Kidney (tissue), 22 donors: ENCODE measurements at regions of chr7 and their contacts with region 1.

Region 1: DNA sequence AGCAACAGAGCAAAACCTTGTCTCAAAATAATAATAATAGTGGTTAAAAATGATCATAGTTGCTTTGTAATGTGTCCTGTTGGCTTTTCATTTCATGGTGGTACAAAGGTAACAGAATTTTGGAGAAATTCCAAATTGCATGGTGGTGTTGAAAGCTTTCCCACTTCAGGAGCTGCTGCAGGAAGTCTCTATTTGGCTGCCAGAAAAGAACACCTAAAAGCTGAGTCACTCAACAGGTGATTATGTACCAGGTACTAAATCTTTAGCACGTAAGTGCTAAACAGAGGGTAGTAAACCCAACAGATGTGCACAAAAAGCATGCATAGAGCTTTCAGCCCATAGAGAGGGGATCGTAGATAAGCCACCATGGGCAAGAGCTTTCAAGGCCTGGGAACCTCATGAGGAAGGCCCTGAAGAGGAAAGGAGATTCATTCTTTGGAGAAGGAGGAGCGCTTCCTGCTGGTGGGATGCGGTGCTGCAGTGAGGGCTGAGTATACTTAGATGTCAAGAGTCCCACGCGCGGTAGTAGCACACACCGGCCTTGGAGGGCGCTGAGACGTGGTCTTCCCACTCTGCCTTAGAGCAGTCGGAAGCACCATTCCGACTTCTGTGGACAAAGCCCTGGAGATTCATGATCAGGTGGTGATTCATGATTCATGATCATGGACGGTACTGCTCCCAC is 118.7 kb downstream of the RALA start:
- DNase-seq: no peak
- H3K4me3 ChIP-seq: no peak overlapping the region
- H3K27ac ChIP-seq: no peak overlapping the region
- H3K4me1 ChIP-seq: no peaks in the 10 kb centered on the region
- H3K27me3 ChIP-seq: no peaks in the 10 kb centered on the region
- CTCF ChIP-seq: peak; percentile 15

Region 2: DNA sequence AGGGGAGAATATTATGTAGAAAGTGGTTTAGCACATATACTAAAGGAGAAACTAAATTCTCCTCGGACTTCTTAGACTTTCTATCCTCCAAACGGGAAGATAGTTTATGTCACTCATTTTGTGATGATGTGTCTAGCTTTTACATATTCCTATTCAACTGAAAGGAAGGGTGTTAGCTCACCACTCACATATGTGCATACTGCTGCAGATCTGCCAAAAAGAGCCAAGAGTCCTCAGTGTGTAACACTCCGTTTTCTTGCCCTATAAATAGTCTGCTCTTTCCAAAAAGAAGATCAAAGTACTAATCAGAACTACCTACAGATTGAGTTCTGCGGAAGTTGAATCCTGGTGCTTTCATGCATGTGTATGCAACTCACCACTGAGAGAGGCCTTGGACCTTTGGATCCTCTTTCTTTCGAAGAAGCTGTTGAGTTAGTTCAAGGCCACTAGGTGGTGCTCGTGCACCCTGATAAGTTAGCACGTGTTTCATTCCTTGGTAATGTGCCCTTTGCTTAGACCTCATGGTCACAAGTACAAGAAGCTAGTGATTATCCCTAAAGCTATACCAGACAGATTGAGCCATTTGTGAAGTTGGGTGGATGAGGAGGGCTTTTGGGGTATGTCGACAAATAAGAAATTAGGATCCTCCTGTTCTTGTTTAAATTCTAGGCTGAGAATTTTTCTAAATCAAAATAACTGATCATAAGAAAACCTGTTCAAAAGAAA is 161.8 kb before region 1 on chr7:
- intact Hi-C with region 1: loop called (anchors 5 kb)
- DNase-seq: peak in 4 of 5 donors; percentile 84 to 96 (median 88)
- H3K4me3 ChIP-seq: no peak overlapping the region
- H3K27ac ChIP-seq: no peak overlapping the region
- H3K4me1 ChIP-seq: peaks cover 0 to 2% (median 0%) of the 10 kb centered on the region in 3 donors
- H3K27me3 ChIP-seq: no peaks in the 10 kb centered on the region
- CTCF ChIP-seq: peak; percentile 92

Region 3: DNA sequence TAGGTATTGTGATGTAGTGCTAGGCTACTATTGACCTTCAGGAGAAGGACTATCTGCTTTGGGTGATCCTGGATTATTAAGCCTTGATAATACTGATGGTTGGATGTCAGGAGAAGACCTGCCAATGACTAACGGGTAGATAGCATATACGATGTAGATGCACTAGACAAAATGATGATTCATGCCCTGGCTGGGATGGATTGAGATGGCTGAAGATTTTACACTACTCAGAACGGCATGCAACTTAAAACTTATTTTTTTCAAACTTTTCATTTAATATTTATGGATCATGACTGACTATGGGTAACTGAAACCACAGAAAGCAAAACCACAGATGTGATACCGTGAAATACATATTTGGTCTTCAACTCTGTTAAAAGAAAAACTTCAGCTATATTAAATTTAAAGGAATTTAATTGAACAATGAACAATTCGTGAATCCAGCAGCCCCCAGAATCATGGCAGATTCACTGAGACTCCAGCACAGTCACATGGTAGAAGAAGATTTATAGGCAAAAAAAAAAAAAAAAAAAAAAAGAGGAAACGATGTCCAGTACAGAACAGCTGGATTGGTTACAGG is 83.4 kb after region 1 on chr7:
- intact Hi-C with region 1: no loop called
- DNase-seq: no peak
- H3K4me3 ChIP-seq: no peak overlapping the region
- H3K27ac ChIP-seq: no peak overlapping the region
- H3K4me1 ChIP-seq: no peaks in the 10 kb centered on the region
- H3K27me3 ChIP-seq: no peaks in the 10 kb centered on the region
- CTCF ChIP-seq: no peak

Region 4: GRCh38 chr7:41148521-41148951 is 1406.5 kb after region 1 on chr7:
- intact Hi-C with region 1: no loop called
- DNase-seq: no peak
- H3K4me3 ChIP-seq: no peak overlapping the region
- H3K27ac ChIP-seq: no peak overlapping the region
- H3K4me1 ChIP-seq: no peaks in the 10 kb centered on the region
- H3K27me3 ChIP-seq: no peaks in the 10 kb centered on the region
- CTCF ChIP-seq: no peak